CD14-positive monocyte (primary cell): ENCODE measurements at regions of chr15 and their contacts with region 1.

Region 1: GRCh38 chr15:73633111-73633990 is at the start of gene NPTN:
- DNase-seq: peak; percentile 97 to 99 (median 98)
- H3K4me3 ChIP-seq: peak within 1 kb of the TSS; percentile 79 to 92 (median 89)
- H3K4me3 Mint-ChIP-seq: peak within 1 kb of the TSS; percentile 91 to 97
- H3K27ac ChIP-seq: peak within 1 kb of the TSS; percentile 77 to 81
- H3K27ac Mint-ChIP-seq: peak within 1 kb of the TSS; percentile 84 to 97 (median 93)
- H3K4me1 ChIP-seq: peaks cover 49 to 60% of the 10 kb centered on the region in 2 donors
- H3K4me1 Mint-ChIP-seq: peaks cover 63% of the 10 kb centered on the region
- H3K27me3 ChIP-seq: no peaks in the 10 kb centered on the region
- H3K27me3 Mint-ChIP-seq: peaks cover 4 to 7% (median 5%) of the 10 kb centered on the region in 3 donors
- CTCF ChIP-seq: no peak
- polyA plus RNA-seq, gene NPTN: 86.5 to 137 (median 88.0) TPM

Region 2: GRCh38 chr15:72117486-72118399 is 1515.6 kb before region 1 on chr15 and contains the start of gene MYO9A:
- intact Hi-C with region 1: loop called in 1 of 2 experiments (anchors 10 kb)
- DNase-seq: peak; percentile 98 to 99 (median 98)
- H3K4me3 ChIP-seq: peak within 1 kb of the TSS; percentile 78 to 87 (median 86)
- H3K4me3 Mint-ChIP-seq: peak within 1 kb of the TSS; percentile 95 to 99
- H3K27ac ChIP-seq: peak within 1 kb of the TSS; percentile 91 to 97
- H3K27ac Mint-ChIP-seq: peak within 1 kb of the TSS; percentile 98 to 100 (median 100)
- H3K4me1 ChIP-seq: peaks cover 16 to 25% of the 10 kb centered on the region in 2 donors
- H3K4me1 Mint-ChIP-seq: peaks cover 24% of the 10 kb centered on the region
- H3K27me3 ChIP-seq: no peaks in the 10 kb centered on the region
- H3K27me3 Mint-ChIP-seq: peaks cover 3% of the 10 kb centered on the region in 3 donors
- CTCF ChIP-seq: no peak
- polyA plus RNA-seq, gene MYO9A: 3.9 to 6.6 (median 5.0) TPM

Region 3: GRCh38 chr15:73284090-73284716 is 349.1 kb before region 1 on chr15:
- intact Hi-C with region 1: loop called in 1 of 2 experiments (anchors 5 kb)
- DNase-seq: peak in 2 of 3 donors; percentile 36 to 51
- H3K4me3 ChIP-seq: no peak overlapping the region
- H3K4me3 Mint-ChIP-seq: no peak overlapping the region
- H3K27ac ChIP-seq: no peak overlapping the region
- H3K27ac Mint-ChIP-seq: no peak overlapping the region
- H3K4me1 ChIP-seq: peaks cover 42 to 43% of the 10 kb centered on the region in 2 donors
- H3K4me1 Mint-ChIP-seq: peaks cover 43% of the 10 kb centered on the region
- H3K27me3 ChIP-seq: peaks cover 0 to 4% of the 10 kb centered on the region in 2 donors
- H3K27me3 Mint-ChIP-seq: peaks cover 6 to 15% (median 13%) of the 10 kb centered on the region in 3 donors
- CTCF ChIP-seq: peak; percentile 80

Region 4: DNA sequence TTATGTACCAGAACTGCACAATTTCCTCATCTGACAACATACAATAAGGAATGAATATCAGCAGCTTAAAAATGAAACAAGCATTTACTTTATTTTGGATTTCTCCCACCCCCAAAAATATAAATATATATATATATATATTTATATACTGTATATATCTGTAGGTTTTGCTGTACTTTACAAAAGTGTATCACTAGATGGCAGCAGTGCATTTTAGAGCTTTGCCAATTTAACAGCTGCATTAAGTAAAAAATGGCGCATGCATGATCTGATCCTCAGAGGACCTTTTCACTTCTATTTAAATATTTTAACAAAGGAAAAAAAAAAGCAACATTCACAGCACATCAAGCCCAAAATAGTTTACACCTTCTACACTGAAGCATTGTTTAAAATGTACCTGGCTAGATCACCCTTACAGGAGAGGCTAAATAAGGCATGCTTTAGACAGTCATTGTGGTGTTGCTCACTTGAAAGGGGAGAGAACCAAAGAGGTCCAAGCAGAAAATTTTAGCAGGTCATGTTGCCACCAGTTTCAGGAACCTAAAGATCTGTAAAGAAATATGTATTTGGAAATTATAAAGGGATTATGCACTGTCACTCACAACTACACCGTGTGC is 72.7 kb before region 1 on chr15:
- intact Hi-C with region 1: loop called (anchors 2 to 5 kb)
- DNase-seq: peak; percentile 25 to 49 (median 32)
- H3K4me3 ChIP-seq: no peak overlapping the region
- H3K4me3 Mint-ChIP-seq: no peak overlapping the region
- H3K27ac ChIP-seq: no peak overlapping the region
- H3K27ac Mint-ChIP-seq: no peak overlapping the region
- H3K4me1 ChIP-seq: peaks cover 18 to 23% of the 10 kb centered on the region in 2 donors
- H3K4me1 Mint-ChIP-seq: peaks cover 21% of the 10 kb centered on the region
- H3K27me3 ChIP-seq: no peaks in the 10 kb centered on the region
- H3K27me3 Mint-ChIP-seq: peaks cover 0 to 2% (median 0%) of the 10 kb centered on the region in 3 donors
- CTCF ChIP-seq: peak; percentile 65

Region 5: DNA sequence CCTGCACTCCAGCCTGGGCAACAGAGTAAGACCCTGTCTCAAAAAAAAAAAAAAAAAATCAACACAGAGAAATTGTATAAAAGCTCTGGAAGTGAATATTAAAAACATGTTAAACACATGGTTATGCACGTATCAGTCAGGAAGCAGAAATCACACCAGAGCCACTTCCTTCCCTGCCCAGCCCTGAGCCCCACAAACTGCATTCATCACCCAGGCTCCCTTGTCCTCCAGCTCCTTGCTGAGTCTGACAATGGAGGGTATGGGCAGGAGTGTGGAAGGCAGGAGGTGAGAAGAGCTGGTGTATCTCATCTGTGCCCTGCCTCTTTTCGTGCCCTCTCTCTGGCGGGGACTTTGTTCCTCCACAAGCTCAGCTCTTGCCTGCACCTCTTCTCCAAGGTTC is 280.8 kb after region 1 on chr15:
- intact Hi-C with region 1: no loop called
- DNase-seq: no peak
- H3K4me3 ChIP-seq: no peak overlapping the region
- H3K4me3 Mint-ChIP-seq: no peak overlapping the region
- H3K27ac ChIP-seq: no peak overlapping the region
- H3K27ac Mint-ChIP-seq: no peak overlapping the region
- H3K4me1 ChIP-seq: no peaks in the 10 kb centered on the region
- H3K4me1 Mint-ChIP-seq: peaks cover 11% of the 10 kb centered on the region
- H3K27me3 ChIP-seq: no peaks in the 10 kb centered on the region
- H3K27me3 Mint-ChIP-seq: peaks cover 8 to 9% (median 9%) of the 10 kb centered on the region in 3 donors
- CTCF ChIP-seq: no peak